ENCODE measurements at regions of chr13 and their contacts with region 1.

Region 1: DNA sequence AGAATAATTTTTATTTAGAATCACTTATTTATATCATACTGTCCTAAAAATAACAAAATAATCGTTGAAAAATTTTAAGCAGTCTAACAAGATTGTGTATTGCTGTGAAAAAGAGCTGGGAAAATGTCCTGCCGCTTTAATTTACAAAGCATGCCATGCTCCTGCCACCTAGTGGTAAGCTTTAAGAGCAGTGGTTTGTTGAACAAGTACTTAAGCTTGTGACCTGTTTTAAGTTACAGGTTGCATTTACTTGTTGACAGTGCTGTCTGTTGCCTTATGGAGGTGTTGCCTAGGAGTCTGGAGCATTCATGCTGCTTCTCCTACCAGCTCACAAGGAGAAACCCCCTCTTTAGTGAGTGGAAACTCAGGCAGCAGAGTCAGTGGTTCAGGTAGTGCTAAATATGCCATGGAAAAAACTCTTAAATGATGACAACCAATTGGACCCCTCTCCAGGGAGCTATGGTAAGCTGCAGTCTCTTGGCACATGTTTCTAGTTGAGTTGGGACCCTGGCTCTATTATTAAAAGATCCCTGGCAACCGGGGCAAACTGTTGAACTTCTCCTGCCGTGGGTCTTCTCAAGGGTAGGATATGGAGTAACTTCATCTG is 68.4 kb downstream of the SPATA13 start:
- DNase-seq: peak in 6 of 9 donors; percentile 39 to 57 (median 46)
- ATAC-seq: peak; percentile 73
- H3K4me3 ChIP-seq: no peak overlapping the region
- H3K4me3 Mint-ChIP-seq: no peak overlapping the region
- H3K27ac ChIP-seq: no peak overlapping the region
- H3K27ac Mint-ChIP-seq: no peak overlapping the region
- H3K4me1 ChIP-seq: peaks cover 0 to 40% of the 10 kb centered on the region in 2 donors
- H3K4me1 Mint-ChIP-seq: peaks cover 9 to 46% (median 19%) of the 10 kb centered on the region in 7 donors
- H3K27me3 ChIP-seq: no peaks in the 10 kb centered on the region
- H3K27me3 Mint-ChIP-seq: no peaks in the 10 kb centered on the region

Region 2: DNA sequence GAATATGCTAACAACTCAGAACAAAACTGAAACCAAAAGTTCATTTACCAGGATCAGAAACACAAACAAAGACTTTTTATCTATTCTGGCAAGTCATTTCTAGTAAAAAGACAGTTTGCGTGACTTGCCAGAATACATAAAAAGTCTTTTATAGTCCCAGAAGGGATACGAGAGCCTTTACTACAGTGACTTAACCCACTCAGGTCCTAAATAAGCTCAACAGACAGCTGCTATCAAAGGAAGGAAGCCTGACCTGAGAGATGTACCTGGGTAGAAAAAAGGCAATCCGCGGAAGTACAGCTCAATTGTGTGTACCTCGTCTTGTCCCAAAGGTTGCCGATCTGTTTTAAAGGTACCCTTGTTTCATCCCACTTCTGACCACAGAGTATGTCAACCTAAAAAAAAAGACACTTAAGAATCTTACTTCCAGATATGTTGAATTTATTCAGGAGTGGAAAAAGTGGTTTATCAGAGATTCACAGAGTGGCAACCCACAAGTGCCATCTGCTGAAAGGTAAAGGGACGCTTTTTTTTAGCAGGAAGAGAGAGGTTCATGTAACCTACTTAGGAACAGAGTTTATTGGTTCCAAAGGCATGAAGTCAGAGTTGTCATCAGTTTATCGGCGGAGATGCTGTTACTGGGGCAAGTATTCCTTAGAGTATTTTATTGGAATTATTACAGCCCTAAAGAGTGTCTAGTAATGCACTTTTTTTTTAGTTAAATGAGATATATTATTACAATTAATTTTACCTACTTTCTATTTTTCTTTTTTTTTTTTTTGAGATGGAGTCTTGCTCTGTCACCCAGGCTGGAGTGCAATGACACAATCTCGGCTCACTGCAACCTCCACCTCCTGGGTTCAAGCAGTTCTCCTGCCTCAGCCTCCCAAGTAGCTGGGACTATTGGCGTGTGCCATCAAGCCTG is 262.0 kb before region 1 on chr13:
- CTCF ChIA-PET with region 1: no interaction called
- POLR2A ChIA-PET with region 1: interaction called, 3 read pairs
- intact Hi-C with region 1: loop called in 1 of 2 experiments (anchors 1 kb)
- DNase-seq: peak in 6 of 9 donors; percentile 19 to 58 (median 48)
- ATAC-seq: peak; percentile 79
- H3K4me3 ChIP-seq: peak overlapping the region; percentile 57
- H3K4me3 Mint-ChIP-seq: peak overlapping the region; percentile 65 to 88 (median 84)
- H3K27ac ChIP-seq: peak overlapping the region; percentile 52
- H3K27ac Mint-ChIP-seq: peak overlapping the region; percentile 18 to 93 (median 88)
- H3K4me1 ChIP-seq: peaks cover 6% of the 10 kb centered on the region in 2 donors
- H3K4me1 Mint-ChIP-seq: peaks cover 6 to 39% (median 18%) of the 10 kb centered on the region in 7 donors
- H3K27me3 ChIP-seq: no peaks in the 10 kb centered on the region
- H3K27me3 Mint-ChIP-seq: no peaks in the 10 kb centered on the region

Region 3: DNA sequence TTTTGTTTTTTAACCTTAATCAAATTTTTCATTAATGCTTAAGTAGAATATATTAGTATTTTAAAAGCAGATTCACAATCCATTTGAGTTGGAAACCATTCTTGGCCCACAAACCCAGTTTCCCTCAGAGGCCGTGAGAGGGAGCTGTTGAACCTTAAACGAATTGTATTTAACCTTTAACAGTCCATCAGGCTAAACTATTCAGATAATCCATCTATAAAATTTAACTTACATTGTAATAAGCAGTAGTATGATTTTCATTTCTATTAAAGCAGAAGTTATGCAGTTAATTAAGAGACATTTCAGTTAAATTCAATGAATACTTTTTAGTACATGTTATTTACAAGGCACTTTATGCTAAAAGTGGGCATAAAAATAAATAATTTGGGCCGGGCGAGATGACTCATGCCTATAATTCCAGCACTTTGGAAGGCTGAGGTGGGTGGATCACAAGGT is 208.6 kb before region 1 on chr13:
- CTCF ChIA-PET with region 1: interaction called, 4 read pairs
- POLR2A ChIA-PET with region 1: interaction called, 4 read pairs
- intact Hi-C with region 1: loop called in 1 of 2 experiments (anchors 2 kb)
- DNase-seq: peak in 6 of 9 donors; percentile 11 to 33 (median 21)
- ATAC-seq: no peak
- H3K4me3 ChIP-seq: no peak overlapping the region
- H3K4me3 Mint-ChIP-seq: no peak overlapping the region
- H3K27ac ChIP-seq: no peak overlapping the region
- H3K27ac Mint-ChIP-seq: no peak overlapping the region
- H3K4me1 ChIP-seq: no peaks in the 10 kb centered on the region
- H3K4me1 Mint-ChIP-seq: peaks cover 0 to 4% (median 0%) of the 10 kb centered on the region in 7 donors
- H3K27me3 ChIP-seq: no peaks in the 10 kb centered on the region
- H3K27me3 Mint-ChIP-seq: peaks cover 0 to 4% (median 0%) of the 10 kb centered on the region in 5 donors

Region 4: DNA sequence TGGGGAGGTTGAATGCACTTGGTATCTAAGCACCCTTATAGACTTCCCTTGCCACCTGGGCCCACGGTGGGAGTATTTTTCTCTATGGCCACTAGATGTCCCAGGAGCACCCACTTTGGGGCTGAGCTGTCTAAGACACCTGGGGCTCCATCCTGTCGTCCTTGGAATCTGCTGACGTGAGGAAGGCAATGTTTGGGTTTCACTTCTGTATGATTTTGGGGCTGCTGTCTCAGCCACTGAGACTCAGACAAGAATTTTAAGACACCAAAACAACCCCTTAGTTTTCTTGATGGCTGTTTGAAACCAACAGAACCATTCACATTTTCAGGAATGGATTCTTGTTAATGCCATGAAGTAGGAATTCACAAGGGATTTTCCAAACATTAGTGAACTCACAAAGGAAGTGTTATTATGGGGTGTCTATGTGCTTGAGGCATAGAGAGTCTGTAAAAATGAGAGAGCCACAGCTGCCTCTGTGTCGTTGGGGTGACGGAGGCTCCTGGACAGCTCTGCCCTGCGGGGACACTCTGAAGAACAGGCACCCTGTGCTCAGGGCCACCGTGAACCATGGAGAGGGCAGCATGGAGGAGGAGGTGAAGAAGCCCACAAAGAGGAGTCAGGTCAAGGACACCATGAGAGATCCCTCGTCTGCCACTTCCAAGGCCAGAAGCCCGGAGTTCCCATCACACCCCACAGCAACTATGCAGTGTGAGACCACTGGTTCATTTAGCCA is 175.3 kb before region 1 on chr13:
- CTCF ChIA-PET with region 1: interaction called, 11 read pairs
- POLR2A ChIA-PET with region 1: no interaction called
- intact Hi-C with region 1: loop called (anchors 2 kb)
- DNase-seq: peak; percentile 24 to 70 (median 61)
- ATAC-seq: peak; percentile 91
- H3K4me3 ChIP-seq: no peak overlapping the region
- H3K4me3 Mint-ChIP-seq: no peak overlapping the region
- H3K27ac ChIP-seq: no peak overlapping the region
- H3K27ac Mint-ChIP-seq: peak overlapping the region in 5 of 9 donors; percentile 21 to 68 (median 24)
- H3K4me1 ChIP-seq: no peaks in the 10 kb centered on the region
- H3K4me1 Mint-ChIP-seq: peaks cover 0 to 12% (median 9%) of the 10 kb centered on the region in 7 donors
- H3K27me3 ChIP-seq: no peaks in the 10 kb centered on the region
- H3K27me3 Mint-ChIP-seq: peaks cover 3 to 22% (median 7%) of the 10 kb centered on the region in 5 donors

Region 5: DNA sequence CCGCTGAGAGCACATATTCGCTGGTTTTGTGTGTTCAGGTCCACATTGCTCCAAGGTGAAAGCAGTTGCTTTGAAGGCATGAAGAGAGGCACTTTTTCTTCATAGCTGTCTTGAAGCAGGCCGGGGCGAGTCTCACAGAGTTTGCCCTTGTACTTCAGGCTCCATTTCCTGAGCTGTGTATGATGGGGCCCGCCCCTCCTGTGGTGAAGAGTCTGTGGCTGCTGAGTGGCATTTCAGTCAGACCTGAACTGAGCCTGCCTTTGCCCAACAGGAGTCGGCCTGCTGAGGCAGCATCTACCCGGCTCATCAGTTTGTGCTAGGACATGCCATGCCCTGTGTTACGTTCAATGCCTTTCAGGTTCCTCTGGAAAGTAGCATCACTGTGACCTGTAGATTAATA is 36.0 kb after region 1 on chr13:
- CTCF ChIA-PET with region 1: interaction called, 5 read pairs
- POLR2A ChIA-PET with region 1: interaction called, 3 read pairs
- intact Hi-C with region 1: loop called in 1 of 2 experiments (anchors 2 kb)
- DNase-seq: peak; percentile 48 to 85 (median 83)
- ATAC-seq: peak; percentile 97
- H3K4me3 ChIP-seq: peak overlapping the region; percentile 28
- H3K4me3 Mint-ChIP-seq: peak overlapping the region; percentile 79 to 85 (median 82)
- H3K27ac ChIP-seq: peak overlapping the region; percentile 89
- H3K27ac Mint-ChIP-seq: peak overlapping the region; percentile 91 to 100 (median 98)
- H3K4me1 ChIP-seq: peaks cover 88 to 94% of the 10 kb centered on the region in 2 donors
- H3K4me1 Mint-ChIP-seq: peaks cover 64 to 98% (median 94%) of the 10 kb centered on the region in 7 donors
- H3K27me3 ChIP-seq: no peaks in the 10 kb centered on the region
- H3K27me3 Mint-ChIP-seq: no peaks in the 10 kb centered on the region

Region 6: GRCh38 chr13:24280720-24281119 is 51.8 kb after region 1 on chr13:
- CTCF ChIA-PET with region 1: no interaction called
- POLR2A ChIA-PET with region 1: no interaction called
- intact Hi-C with region 1: no loop called
- DNase-seq: no peak
- ATAC-seq: peak; percentile 57
- H3K4me3 ChIP-seq: no peak overlapping the region
- H3K4me3 Mint-ChIP-seq: no peak overlapping the region
- H3K27ac ChIP-seq: no peak overlapping the region
- H3K27ac Mint-ChIP-seq: peak overlapping the region; percentile 24 to 87 (median 75)
- H3K4me1 ChIP-seq: peaks cover 30 to 34% of the 10 kb centered on the region in 2 donors
- H3K4me1 Mint-ChIP-seq: peaks cover 46 to 78% (median 69%) of the 10 kb centered on the region in 7 donors
- H3K27me3 ChIP-seq: no peaks in the 10 kb centered on the region
- H3K27me3 Mint-ChIP-seq: no peaks in the 10 kb centered on the region

Region 7: DNA sequence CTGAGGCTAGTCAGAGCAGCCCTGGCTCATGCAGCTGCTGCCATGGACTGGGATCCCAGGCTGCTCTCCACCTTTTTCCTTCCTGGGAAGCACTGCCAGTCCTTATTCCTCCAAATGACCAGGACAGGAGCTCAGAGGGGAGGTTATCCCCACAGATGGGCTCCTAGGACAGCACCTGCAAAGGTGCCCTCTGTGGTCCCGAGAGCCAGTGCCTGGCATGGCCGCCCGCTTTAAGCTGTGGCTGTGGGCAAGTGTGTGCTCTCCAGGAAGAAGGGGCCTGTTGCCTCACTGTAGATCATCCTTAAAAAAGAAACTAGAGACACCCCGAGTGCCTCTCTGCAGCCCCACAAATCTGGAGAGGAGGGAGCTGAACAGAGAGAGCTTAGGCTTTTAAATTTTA is 164.0 kb after region 1 on chr13:
- CTCF ChIA-PET with region 1: no interaction called
- POLR2A ChIA-PET with region 1: no interaction called
- intact Hi-C with region 1: no loop called
- DNase-seq: no peak
- ATAC-seq: no peak
- H3K4me3 ChIP-seq: no peak overlapping the region
- H3K4me3 Mint-ChIP-seq: no peak overlapping the region
- H3K27ac ChIP-seq: no peak overlapping the region
- H3K27ac Mint-ChIP-seq: no peak overlapping the region
- H3K4me1 ChIP-seq: no peaks in the 10 kb centered on the region
- H3K4me1 Mint-ChIP-seq: no peaks in the 10 kb centered on the region
- H3K27me3 ChIP-seq: no peaks in the 10 kb centered on the region
- H3K27me3 Mint-ChIP-seq: no peaks in the 10 kb centered on the region

Measured in naive thymus-derived CD4-positive, alpha-beta T cell (primary cell).